CD8-positive, alpha-beta T cell (primary cell): ENCODE measurements at regions of chr1 and their contacts with region 1.

Region 1: GRCh38 chr1:157580179-157580827 is 17.6 kb downstream of the FCRL4 start:
- DNase-seq: peak in 6 of 9 experiments; percentile 5 to 73 (median 22)
- ATAC-seq: no peak
- H3K4me3 ChIP-seq: no peak overlapping the region
- H3K4me3 Mint-ChIP-seq: no peak overlapping the region
- H3K27ac ChIP-seq: no peak overlapping the region
- H3K27ac Mint-ChIP-seq: no peak overlapping the region
- H3K4me1 ChIP-seq: no peaks in the 10 kb centered on the region
- H3K4me1 Mint-ChIP-seq: no peaks in the 10 kb centered on the region
- H3K27me3 ChIP-seq: no peaks in the 10 kb centered on the region
- H3K27me3 Mint-ChIP-seq: peaks cover 3% of the 10 kb centered on the region
- CTCF ChIP-seq: peak; percentile 75

Region 2: GRCh38 chr1:157415661-157416060 is 164.6 kb before region 1 on chr1:
- CTCF ChIA-PET with region 1: no interaction called
- POLR2A ChIA-PET with region 1: no interaction called
- intact Hi-C with region 1: no loop called
- DNase-seq: no peak
- ATAC-seq: no peak
- H3K4me3 ChIP-seq: no peak overlapping the region
- H3K4me3 Mint-ChIP-seq: no peak overlapping the region
- H3K27ac ChIP-seq: no peak overlapping the region
- H3K27ac Mint-ChIP-seq: no peak overlapping the region
- H3K4me1 ChIP-seq: no peaks in the 10 kb centered on the region
- H3K4me1 Mint-ChIP-seq: no peaks in the 10 kb centered on the region
- H3K27me3 ChIP-seq: no peaks in the 10 kb centered on the region
- H3K27me3 Mint-ChIP-seq: peaks cover 17% of the 10 kb centered on the region
- CTCF ChIP-seq: no peak

Region 3: DNA sequence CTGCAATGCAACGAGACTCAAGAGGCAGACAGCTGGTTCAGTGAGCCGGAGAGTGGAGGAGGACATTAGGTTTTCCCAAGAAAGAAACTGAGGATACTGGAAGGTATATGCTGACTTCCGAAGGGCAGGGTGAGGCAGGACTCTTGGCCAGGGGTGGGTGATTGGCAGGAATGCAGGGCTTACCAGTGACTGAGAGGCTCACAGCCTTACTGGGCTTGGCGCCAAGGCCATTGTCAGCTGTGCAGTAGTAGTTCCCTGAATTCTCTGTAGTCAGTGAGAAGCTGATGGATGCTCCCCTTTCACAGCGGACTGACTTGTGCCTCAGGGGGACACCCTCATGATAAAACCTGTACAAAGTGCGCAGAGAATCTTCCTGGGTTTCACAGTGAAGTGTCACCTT is 37.6 kb before region 1 on chr1:
- CTCF ChIA-PET with region 1: no interaction called
- POLR2A ChIA-PET with region 1: no interaction called
- intact Hi-C with region 1: no loop called
- DNase-seq: no peak
- ATAC-seq: no peak
- H3K4me3 ChIP-seq: no peak overlapping the region
- H3K4me3 Mint-ChIP-seq: no peak overlapping the region
- H3K27ac ChIP-seq: no peak overlapping the region
- H3K27ac Mint-ChIP-seq: no peak overlapping the region
- H3K4me1 ChIP-seq: no peaks in the 10 kb centered on the region
- H3K4me1 Mint-ChIP-seq: no peaks in the 10 kb centered on the region
- H3K27me3 ChIP-seq: no peaks in the 10 kb centered on the region
- H3K27me3 Mint-ChIP-seq: peaks cover 26% of the 10 kb centered on the region
- CTCF ChIP-seq: no peak

Region 4: GRCh38 chr1:157566484-157567300 is 13.6 kb before region 1 on chr1:
- CTCF ChIA-PET with region 1: interaction called, 20 read pairs
- POLR2A ChIA-PET with region 1: no interaction called
- intact Hi-C with region 1: no loop called
- DNase-seq: no peak
- ATAC-seq: no peak
- H3K4me3 ChIP-seq: no peak overlapping the region
- H3K4me3 Mint-ChIP-seq: no peak overlapping the region
- H3K27ac ChIP-seq: no peak overlapping the region
- H3K27ac Mint-ChIP-seq: no peak overlapping the region
- H3K4me1 ChIP-seq: no peaks in the 10 kb centered on the region
- H3K4me1 Mint-ChIP-seq: peaks cover 2% of the 10 kb centered on the region
- H3K27me3 ChIP-seq: no peaks in the 10 kb centered on the region
- H3K27me3 Mint-ChIP-seq: peaks cover 18% of the 10 kb centered on the region
- CTCF ChIP-seq: no peak

Region 5: DNA sequence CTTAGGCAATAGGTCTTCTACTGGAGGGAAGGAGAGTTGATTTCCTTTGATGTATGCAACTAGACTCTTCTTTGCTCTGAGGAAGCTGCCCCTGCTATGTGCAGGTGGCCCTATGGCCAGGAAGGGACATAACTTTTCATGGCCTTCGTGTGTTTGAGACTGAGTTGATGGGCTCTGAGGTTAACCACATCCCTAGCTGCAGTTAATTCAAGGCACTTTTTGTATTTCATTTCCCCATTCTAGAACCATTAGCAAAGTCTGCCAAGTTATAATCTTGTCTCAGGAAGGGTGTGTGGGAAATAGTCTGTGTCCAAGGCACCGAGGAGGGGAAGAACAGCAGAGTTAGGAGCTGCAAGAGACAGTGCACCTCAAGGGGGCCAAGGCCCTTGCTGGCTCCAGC is 15.1 kb after region 1 on chr1:
- CTCF ChIA-PET with region 1: interaction called, 24 read pairs
- POLR2A ChIA-PET with region 1: no interaction called
- intact Hi-C with region 1: no loop called
- DNase-seq: no peak
- ATAC-seq: no peak
- H3K4me3 ChIP-seq: no peak overlapping the region
- H3K4me3 Mint-ChIP-seq: no peak overlapping the region
- H3K27ac ChIP-seq: no peak overlapping the region
- H3K27ac Mint-ChIP-seq: no peak overlapping the region
- H3K4me1 ChIP-seq: no peaks in the 10 kb centered on the region
- H3K4me1 Mint-ChIP-seq: peaks cover 4% of the 10 kb centered on the region
- H3K27me3 ChIP-seq: no peaks in the 10 kb centered on the region
- H3K27me3 Mint-ChIP-seq: peaks cover 7% of the 10 kb centered on the region
- CTCF ChIP-seq: no peak

Region 6: GRCh38 chr1:157691285-157691920 is 111.1 kb after region 1 on chr1:
- CTCF ChIA-PET with region 1: interaction called, 11 read pairs
- POLR2A ChIA-PET with region 1: no interaction called
- intact Hi-C with region 1: loop called (anchors 1 to 2 kb)
- DNase-seq: peak in 2 of 9 experiments; percentile 23 to 30
- ATAC-seq: no peak
- H3K4me3 ChIP-seq: no peak overlapping the region
- H3K4me3 Mint-ChIP-seq: no peak overlapping the region
- H3K27ac ChIP-seq: no peak overlapping the region
- H3K27ac Mint-ChIP-seq: no peak overlapping the region
- H3K4me1 ChIP-seq: no peaks in the 10 kb centered on the region
- H3K4me1 Mint-ChIP-seq: peaks cover 32% of the 10 kb centered on the region
- H3K27me3 ChIP-seq: no peaks in the 10 kb centered on the region
- H3K27me3 Mint-ChIP-seq: peaks cover 2% of the 10 kb centered on the region
- CTCF ChIP-seq: no peak

Region 7: GRCh38 chr1:157773493-157774350 is 193.4 kb after region 1 on chr1:
- CTCF ChIA-PET with region 1: interaction called, 40 read pairs
- POLR2A ChIA-PET with region 1: no interaction called
- intact Hi-C with region 1: loop called (anchors 1 to 2 kb)
- DNase-seq: peak in 3 of 9 experiments; percentile 5 to 58 (median 51)
- ATAC-seq: peak; percentile 57
- H3K4me3 ChIP-seq: no peak overlapping the region
- H3K4me3 Mint-ChIP-seq: no peak overlapping the region
- H3K27ac ChIP-seq: no peak overlapping the region
- H3K27ac Mint-ChIP-seq: peak overlapping the region; percentile 24
- H3K4me1 ChIP-seq: no peaks in the 10 kb centered on the region
- H3K4me1 Mint-ChIP-seq: peaks cover 6% of the 10 kb centered on the region
- H3K27me3 ChIP-seq: no peaks in the 10 kb centered on the region
- H3K27me3 Mint-ChIP-seq: peaks cover 3% of the 10 kb centered on the region
- CTCF ChIP-seq: no peak

Region 8: GRCh38 chr1:157948312-157949073 is 368.2 kb after region 1 on chr1:
- CTCF ChIA-PET with region 1: interaction called, 3 read pairs
- POLR2A ChIA-PET with region 1: no interaction called
- intact Hi-C with region 1: loop called in 1 of 2 experiments (anchors 5 kb)
- DNase-seq: peak in 2 of 9 experiments; percentile 10 to 22
- ATAC-seq: no peak
- H3K4me3 ChIP-seq: no peak overlapping the region
- H3K4me3 Mint-ChIP-seq: no peak overlapping the region
- H3K27ac ChIP-seq: no peak overlapping the region
- H3K27ac Mint-ChIP-seq: no peak overlapping the region
- H3K4me1 ChIP-seq: no peaks in the 10 kb centered on the region
- H3K4me1 Mint-ChIP-seq: no peaks in the 10 kb centered on the region
- H3K27me3 ChIP-seq: no peaks in the 10 kb centered on the region
- H3K27me3 Mint-ChIP-seq: peaks cover 24% of the 10 kb centered on the region
- CTCF ChIP-seq: no peak